ENCODE measurements at regions of chr5 and their contacts with region 1.

Region 1: DNA sequence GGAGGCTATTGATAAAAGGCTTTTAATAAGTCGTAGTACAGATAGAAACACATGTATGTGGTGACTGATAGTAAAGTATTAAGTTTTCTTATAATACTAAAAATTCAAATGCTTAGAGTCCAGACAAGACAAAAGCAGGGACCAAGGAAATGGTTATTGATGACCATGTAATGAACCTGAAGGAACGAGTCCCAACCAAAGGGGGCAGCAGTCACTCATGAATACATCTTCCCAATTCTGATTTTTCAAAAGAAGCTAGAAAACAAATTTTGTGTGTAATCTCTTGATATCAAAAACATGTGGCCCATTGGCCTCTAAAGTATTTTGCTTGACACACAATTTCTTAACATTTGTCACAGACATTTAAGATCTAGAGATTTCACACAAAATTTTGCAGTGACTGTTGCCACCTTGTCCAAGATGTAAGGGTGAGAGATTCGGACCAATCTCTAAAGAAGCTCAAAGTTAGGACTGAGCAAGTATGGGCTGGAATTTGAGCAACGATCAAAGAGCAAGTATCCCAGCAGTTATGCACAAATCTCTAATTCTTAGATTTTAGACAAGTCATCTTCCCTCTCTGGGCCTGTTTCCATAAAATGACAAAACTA is 66.8 kb downstream of the ARL15 start:
- DNase-seq: no peak
- H3K4me3 Mint-ChIP-seq: no peak overlapping the region
- H3K27ac Mint-ChIP-seq: no peak overlapping the region
- H3K4me1 Mint-ChIP-seq: no peaks in the 10 kb centered on the region
- H3K27me3 Mint-ChIP-seq: peaks cover 10% of the 10 kb centered on the region

Region 2: DNA sequence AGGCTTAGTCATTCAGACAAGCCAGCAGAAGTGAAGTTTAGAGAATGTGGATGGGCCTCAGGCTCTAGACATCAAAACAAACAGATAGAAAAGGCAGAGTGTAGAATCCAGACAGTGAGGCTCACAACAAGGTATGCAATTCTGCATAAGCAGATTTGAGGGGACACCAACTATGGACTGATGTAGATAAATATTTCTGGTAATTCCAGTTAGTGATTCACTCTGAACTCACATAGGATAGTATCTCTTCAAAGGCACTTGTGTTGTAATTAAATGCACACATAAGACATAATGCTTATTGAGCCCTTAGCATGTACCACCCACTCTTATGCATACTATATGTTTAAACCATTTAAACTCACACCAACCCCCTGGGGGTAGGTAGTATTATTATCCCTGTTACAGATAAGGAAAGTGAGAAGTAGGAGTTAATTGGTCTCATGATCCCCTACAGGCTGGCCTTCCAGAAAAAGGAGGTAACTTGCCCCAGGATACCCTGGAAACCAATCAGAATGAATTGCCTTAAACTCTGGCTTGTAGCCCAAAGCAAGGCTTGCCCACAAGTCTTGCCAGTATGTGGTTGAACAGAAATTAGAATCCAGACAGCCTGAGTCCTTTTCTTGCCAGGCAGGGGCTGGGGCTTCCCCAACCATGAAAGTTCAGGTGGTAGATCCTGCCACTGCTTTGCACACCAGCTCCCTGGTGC is 172.5 kb after region 1 on chr5:
- intact Hi-C with region 1: loop called (anchors 2 kb)
- DNase-seq: no peak
- H3K4me3 Mint-ChIP-seq: no peak overlapping the region
- H3K27ac Mint-ChIP-seq: no peak overlapping the region
- H3K4me1 Mint-ChIP-seq: no peaks in the 10 kb centered on the region
- H3K27me3 Mint-ChIP-seq: peaks cover 19% of the 10 kb centered on the region

Region 3: DNA sequence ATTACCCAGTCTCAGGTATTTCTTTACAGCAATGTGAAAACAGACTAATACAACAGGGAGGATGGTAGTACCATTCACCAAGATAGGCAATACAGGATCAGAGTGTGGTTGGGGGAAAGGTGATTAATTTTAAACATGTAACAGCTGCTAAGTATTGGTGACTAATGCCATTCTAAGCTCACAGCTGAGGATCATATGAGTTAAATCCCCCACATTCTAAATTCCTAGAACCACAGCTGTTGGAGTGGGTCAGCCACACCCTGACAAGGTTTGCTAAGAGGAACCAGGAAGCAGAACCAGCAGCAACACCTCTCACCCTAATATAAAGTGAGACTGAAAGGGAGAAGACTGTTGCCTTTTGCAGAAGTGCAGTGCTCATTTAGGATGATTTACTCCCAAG is 236.7 kb after region 1 on chr5:
- intact Hi-C with region 1: loop called (anchors 5 kb)
- DNase-seq: no peak
- H3K4me3 Mint-ChIP-seq: no peak overlapping the region
- H3K27ac Mint-ChIP-seq: no peak overlapping the region
- H3K4me1 Mint-ChIP-seq: no peaks in the 10 kb centered on the region
- H3K27me3 Mint-ChIP-seq: peaks cover 13% of the 10 kb centered on the region

Measured in activated T-helper 2 cell treated with anti-CD3 and anti-CD28 coated beads, Interferon-gamma antibody, Interleukin-2, Interleukin-4, amounts not matched to agents 10 μg/mL and 5 μg/mL and 100 μg/mL, durations not matched to agents 14 hours and 24 hours and 36 hours (primary cell).